ENCODE measurements at regions of chr6 and their contacts with region 1.

Region 1: GRCh38 chr6:83615025-83615999 is 93.6 kb downstream of the SNAP91 start:
- DNase-seq: no peak
- ATAC-seq: peak; percentile 80
- H3K4me3 ChIP-seq: no peak overlapping the region
- H3K27ac ChIP-seq: no peak overlapping the region
- H3K4me1 ChIP-seq: no peaks in the 10 kb centered on the region
- H3K27me3 ChIP-seq: no peaks in the 10 kb centered on the region
- CTCF ChIP-seq: peak; percentile 41 to 54 (median 47); a peak in 5 of 6 replicates
- EP300 ChIP-seq: no peak
- POLR2A ChIP-seq: no peak
- RAD21 ChIP-seq: peak; percentile 56

Region 2: DNA sequence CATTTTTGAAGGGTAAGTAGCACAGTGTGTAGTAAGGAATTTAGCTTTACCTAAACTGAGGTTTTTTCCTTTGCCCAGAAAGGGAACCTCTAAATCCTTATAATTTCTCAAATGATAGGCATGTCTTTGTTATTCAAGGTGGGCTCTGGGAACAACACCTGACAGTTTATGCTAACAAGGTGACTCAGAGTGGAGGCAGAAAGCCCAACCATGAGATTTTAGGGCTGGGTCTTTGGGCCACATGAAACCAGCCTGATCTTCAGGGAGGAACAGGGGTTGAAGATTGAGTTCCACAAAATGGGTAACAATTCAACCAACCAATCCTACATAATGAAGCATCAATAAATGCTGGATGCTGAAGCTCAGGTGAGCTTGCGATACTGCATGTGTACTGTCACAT is 56.3 kb before region 1 on chr6:
- CTCF ChIA-PET with region 1: no interaction called
- POLR2A ChIA-PET with region 1: no interaction called
- RAD21 ChIA-PET with region 1: no interaction called
- SMC1A ChIA-PET with region 1: no interaction called
- in situ Hi-C with region 1: no loop called
- intact Hi-C with region 1: no loop called
- DNase-seq: no peak
- ATAC-seq: no peak
- H3K4me3 ChIP-seq: no peak overlapping the region
- H3K27ac ChIP-seq: no peak overlapping the region
- H3K4me1 ChIP-seq: no peaks in the 10 kb centered on the region
- H3K27me3 ChIP-seq: no peaks in the 10 kb centered on the region
- CTCF ChIP-seq: no peak
- EP300 ChIP-seq: no peak
- POLR2A ChIP-seq: no peak
- RAD21 ChIP-seq: no peak

Region 3: GRCh38 chr6:83600459-83600858 is 14.9 kb before region 1 on chr6:
- CTCF ChIA-PET with region 1: interaction called, 20 read pairs
- POLR2A ChIA-PET with region 1: no interaction called
- RAD21 ChIA-PET with region 1: interaction called, 5 read pairs
- SMC1A ChIA-PET with region 1: interaction called, 10 read pairs
- in situ Hi-C with region 1: no loop called
- intact Hi-C with region 1: no loop called
- DNase-seq: no peak
- ATAC-seq: no peak
- H3K4me3 ChIP-seq: no peak overlapping the region
- H3K27ac ChIP-seq: no peak overlapping the region
- H3K4me1 ChIP-seq: no peaks in the 10 kb centered on the region
- H3K27me3 ChIP-seq: no peaks in the 10 kb centered on the region
- CTCF ChIP-seq: no peak
- EP300 ChIP-seq: no peak
- POLR2A ChIP-seq: no peak
- RAD21 ChIP-seq: no peak

Region 4: GRCh38 chr6:83804886-83805285 is 189.6 kb after region 1 on chr6:
- CTCF ChIA-PET with region 1: interaction called, 7 read pairs
- POLR2A ChIA-PET with region 1: no interaction called
- RAD21 ChIA-PET with region 1: interaction called, 10 read pairs
- SMC1A ChIA-PET with region 1: interaction called, 12 read pairs
- in situ Hi-C with region 1: no loop called
- intact Hi-C with region 1: no loop called
- DNase-seq: no peak
- ATAC-seq: no peak
- H3K4me3 ChIP-seq: no peak overlapping the region
- H3K27ac ChIP-seq: no peak overlapping the region
- H3K4me1 ChIP-seq: no peaks in the 10 kb centered on the region
- H3K27me3 ChIP-seq: no peaks in the 10 kb centered on the region
- CTCF ChIP-seq: no peak
- EP300 ChIP-seq: no peak
- POLR2A ChIP-seq: no peak
- RAD21 ChIP-seq: no peak

Region 5: GRCh38 chr6:83867527-83868161 is 252.3 kb after region 1 on chr6:
- CTCF ChIA-PET with region 1: no interaction called
- POLR2A ChIA-PET with region 1: no interaction called
- RAD21 ChIA-PET with region 1: no interaction called
- SMC1A ChIA-PET with region 1: no interaction called
- in situ Hi-C with region 1: no loop called
- intact Hi-C with region 1: loop called (anchors 5 kb)
- DNase-seq: no peak
- ATAC-seq: peak; percentile 28; the same call in 1 of the 3 replicates
- H3K4me3 ChIP-seq: no peak overlapping the region
- H3K27ac ChIP-seq: no peak overlapping the region
- H3K4me1 ChIP-seq: peaks cover under 1% of the 10 kb centered on the region; the same call in 1 of the 2 replicates
- H3K27me3 ChIP-seq: no peaks in the 10 kb centered on the region
- CTCF ChIP-seq: no peak
- EP300 ChIP-seq: no peak
- POLR2A ChIP-seq: no peak
- RAD21 ChIP-seq: no peak

Region 6: DNA sequence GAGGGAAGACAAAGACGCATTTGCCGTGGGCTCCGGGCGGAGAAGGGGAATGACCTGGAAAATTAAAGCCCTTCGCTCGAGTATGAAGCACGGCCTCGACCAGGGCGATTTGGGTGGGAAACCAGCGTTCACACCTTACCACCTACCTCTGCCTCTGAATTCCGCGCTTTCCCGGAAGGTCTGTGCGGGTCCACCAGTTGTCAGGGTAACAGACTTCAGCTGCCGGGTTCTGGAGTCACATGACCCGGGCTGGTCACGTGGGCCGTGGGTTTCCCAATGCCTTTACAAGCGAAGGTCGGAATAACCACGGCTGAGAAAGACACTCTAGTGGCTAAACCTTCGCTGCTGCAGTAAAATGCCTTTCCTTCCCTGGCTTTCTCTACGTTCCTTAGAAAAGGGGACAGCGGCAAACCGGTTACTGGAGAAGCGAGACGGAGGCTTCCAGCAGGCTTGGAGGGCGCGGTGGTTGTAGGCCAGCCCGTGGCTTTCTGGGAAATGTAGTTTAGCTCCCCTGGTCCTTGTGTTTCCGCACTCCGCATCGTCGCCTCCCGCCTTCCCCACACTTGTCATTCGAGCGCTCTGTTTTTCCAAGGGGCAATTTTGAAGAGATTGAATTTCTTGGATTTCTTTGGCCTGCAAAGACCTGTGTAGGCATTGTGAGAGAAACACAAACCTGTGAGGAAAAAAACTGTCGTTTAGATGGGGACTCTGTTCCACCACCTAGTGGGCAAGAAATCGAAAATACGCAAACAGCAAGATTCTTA is 612.3 kb after region 1 on chr6 and contains the start of gene CEP162:
- CTCF ChIA-PET with region 1: interaction called, 12 read pairs
- POLR2A ChIA-PET with region 1: no interaction called
- RAD21 ChIA-PET with region 1: interaction called, 8 read pairs
- SMC1A ChIA-PET with region 1: interaction called, 13 read pairs
- in situ Hi-C with region 1: loop called (anchors 10 kb)
- intact Hi-C with region 1: no loop called
- DNase-seq: peak; percentile 79
- ATAC-seq: peak; percentile 98
- H3K4me3 ChIP-seq: peak within 1 kb of the TSS; percentile 95
- H3K27ac ChIP-seq: peak within 1 kb of the TSS; percentile 51
- H3K4me1 ChIP-seq: no peaks in the 10 kb centered on the region
- H3K27me3 ChIP-seq: no peaks in the 10 kb centered on the region
- CTCF ChIP-seq: peak; percentile 59 to 69 (median 60)
- EP300 ChIP-seq: no peak
- POLR2A ChIP-seq: peak; percentile 52
- RAD21 ChIP-seq: peak; percentile 28
- polyA plus RNA-seq, gene CEP162: 2.7 to 2.8 TPM